ENCODE measurements at regions of chr7 and their contacts with region 1.

Region 1: GRCh38 chr7:80428161-80429054 is 83.5 kb downstream of the GNAT3 start:
- DNase-seq: no peak
- ATAC-seq: peak; percentile 73
- H3K4me3 ChIP-seq: no peak overlapping the region
- H3K27ac ChIP-seq: no peak overlapping the region
- H3K4me1 ChIP-seq: no peaks in the 10 kb centered on the region
- H3K27me3 ChIP-seq: no peaks in the 10 kb centered on the region; a peak in 1 of 4 replicates
- CTCF ChIP-seq: peak; percentile 25 to 53 (median 40); a peak in 4 of 6 replicates
- EP300 ChIP-seq: no peak
- POLR2A ChIP-seq: no peak
- RAD21 ChIP-seq: peak; percentile 95

Region 2: GRCh38 chr7:80681272-80681885 is 253.0 kb after region 1 on chr7:
- CTCF ChIA-PET with region 1: no interaction called
- POLR2A ChIA-PET with region 1: no interaction called
- RAD21 ChIA-PET with region 1: interaction called, 4 read pairs
- SMC1A ChIA-PET with region 1: no interaction called
- in situ Hi-C with region 1: no loop called
- intact Hi-C with region 1: loop called (anchors 5 kb)
- DNase-seq: no peak
- ATAC-seq: peak; percentile 87
- H3K4me3 ChIP-seq: no peak overlapping the region
- H3K27ac ChIP-seq: no peak overlapping the region
- H3K4me1 ChIP-seq: no peaks in the 10 kb centered on the region
- H3K27me3 ChIP-seq: no peaks in the 10 kb centered on the region
- CTCF ChIP-seq: peak in 2 of 3 experiments; percentile 35; a peak in 3 of 6 replicates
- EP300 ChIP-seq: no peak
- POLR2A ChIP-seq: no peak
- RAD21 ChIP-seq: peak; percentile 32

Region 3: GRCh38 chr7:81457852-81458522 is 1029.6 kb after region 1 on chr7:
- CTCF ChIA-PET with region 1: no interaction called
- POLR2A ChIA-PET with region 1: no interaction called
- RAD21 ChIA-PET with region 1: no interaction called
- SMC1A ChIA-PET with region 1: no interaction called
- in situ Hi-C with region 1: no loop called
- intact Hi-C with region 1: loop called (anchors 10 kb)
- DNase-seq: no peak
- ATAC-seq: no peak
- H3K4me3 ChIP-seq: no peak overlapping the region
- H3K27ac ChIP-seq: no peak overlapping the region
- H3K4me1 ChIP-seq: no peaks in the 10 kb centered on the region
- H3K27me3 ChIP-seq: no peaks in the 10 kb centered on the region
- CTCF ChIP-seq: no peak; a peak in 1 of 6 replicates
- EP300 ChIP-seq: no peak
- POLR2A ChIP-seq: no peak
- RAD21 ChIP-seq: no peak

Measured in GM12878 (cell line).